Posterior vena cava (tissue), 2 donors: ENCODE measurements at regions of chr16 and their contacts with region 1.

Region 1: GRCh38 chr16:57383276-57384247 is 11.3 kb downstream of the CX3CL1 start:
- DNase-seq: no peak

Region 2: GRCh38 chr16:56281256-56281805 is 1102.2 kb before region 1 on chr16:
- intact Hi-C with region 1: no loop called
- DNase-seq: no peak

Region 3: DNA sequence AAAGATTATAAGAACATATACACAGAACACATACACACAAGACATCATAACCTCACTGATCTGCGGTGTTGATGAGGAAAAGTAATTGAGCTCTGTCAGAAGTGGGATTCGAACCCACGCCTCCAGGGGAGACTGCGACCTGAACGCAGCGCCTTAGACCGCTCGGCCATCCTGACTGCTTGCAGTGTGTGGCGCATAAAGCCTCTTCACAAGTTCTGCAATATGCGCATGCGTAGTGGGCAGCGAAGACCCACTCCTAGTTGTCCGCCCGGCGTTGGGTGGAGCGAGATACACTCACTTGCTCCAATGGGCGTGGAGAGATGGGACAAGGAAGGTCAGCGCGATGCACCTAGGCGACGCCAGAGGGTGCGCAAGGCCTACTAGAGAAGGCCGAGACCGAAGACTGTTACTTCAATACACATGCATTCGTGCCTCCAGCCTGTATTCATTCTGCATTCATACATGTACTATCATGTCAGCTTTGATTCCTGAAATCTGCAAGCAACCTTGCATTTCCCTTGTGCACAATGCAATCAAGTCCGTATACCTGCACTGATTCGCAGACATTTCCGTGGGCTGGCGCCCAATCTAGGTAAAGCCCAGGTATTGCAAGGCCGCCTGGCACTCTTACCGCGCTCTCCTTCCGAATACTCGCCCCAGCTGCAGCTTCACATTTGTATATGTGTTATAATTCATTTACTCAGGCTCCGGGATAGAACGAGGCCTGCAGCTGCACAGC is 83.0 kb before region 1 on chr16:
- intact Hi-C with region 1: loop called in 1 of 2 experiments (anchors 5 kb)
- DNase-seq: peak; percentile 99

Region 4: DNA sequence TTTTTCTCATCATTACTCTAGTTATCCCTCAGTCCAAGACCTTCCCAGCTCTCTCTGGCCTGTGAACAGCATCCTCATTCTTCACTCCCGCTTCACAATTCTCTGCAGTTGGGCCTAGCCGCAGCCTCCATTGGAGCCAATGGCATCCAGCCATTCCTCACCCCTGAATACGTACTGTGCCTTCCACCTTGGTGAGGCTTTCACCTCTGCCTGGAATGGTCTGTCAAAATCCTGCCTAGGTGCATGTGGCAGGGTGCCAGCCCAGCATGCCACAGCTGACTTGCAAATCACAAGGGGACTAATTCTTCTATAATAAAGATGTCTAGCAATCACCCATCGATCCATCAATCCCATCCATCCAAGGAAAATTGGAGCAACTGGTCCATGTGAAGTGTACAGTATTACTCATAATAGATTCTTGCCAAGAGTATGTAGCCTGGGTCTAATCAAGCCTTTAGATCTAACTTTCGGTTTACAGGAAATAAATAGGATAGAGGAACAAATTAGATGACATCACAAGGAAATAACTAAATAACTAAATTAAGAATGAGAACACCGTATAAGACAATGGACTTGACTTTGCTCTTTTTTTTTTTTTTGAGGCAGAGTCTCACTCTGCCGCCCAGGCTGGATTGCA is 16.3 kb before region 1 on chr16:
- intact Hi-C with region 1: loop called in 1 of 2 experiments (anchors 1 kb)
- DNase-seq: peak; percentile 53

Region 5: GRCh38 chr16:57403965-57404817 is 20.6 kb after region 1 on chr16 and contains the start of gene CCL17:
- intact Hi-C with region 1: loop called in 1 of 2 experiments (anchors 2 kb)
- DNase-seq: peak; percentile 36
- total RNA-seq, gene CCL17: not detected

Region 6: DNA sequence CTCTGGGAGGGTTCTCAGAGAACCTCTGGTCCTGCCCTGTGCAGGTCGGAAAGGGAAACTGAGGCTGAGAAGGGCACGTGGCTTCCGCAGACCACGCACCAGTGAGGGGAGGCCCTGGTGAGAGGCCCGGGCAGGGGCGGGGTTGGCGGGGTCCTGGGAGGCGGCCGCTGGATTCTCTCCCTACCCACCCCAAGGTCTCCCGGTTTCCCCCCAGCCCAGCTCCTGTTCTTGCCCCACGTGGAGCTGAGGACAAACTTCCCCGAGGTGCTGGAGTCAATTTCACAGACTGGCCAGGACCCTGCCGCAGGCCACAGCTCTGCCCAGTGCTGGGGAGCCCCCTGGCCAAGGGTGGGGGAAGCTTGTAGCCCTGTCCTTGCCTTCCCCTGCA is 32.6 kb after region 1 on chr16:
- intact Hi-C with region 1: loop called in 1 of 2 experiments (anchors 5 kb)
- DNase-seq: no peak